ENCODE measurements at regions of chr2 and their contacts with region 1.

Region 1: GRCh38 chr2:207746131-207746530 is 23.6 kb downstream of the FZD5 start:
- DNase-seq: peak; percentile 85
- ATAC-seq: peak; percentile 79
- H3K4me3 ChIP-seq: no peak overlapping the region
- H3K27ac ChIP-seq: peak overlapping the region; percentile 2
- H3K4me1 ChIP-seq: peaks cover 64% of the 10 kb centered on the region
- H3K27me3 ChIP-seq: no peaks in the 10 kb centered on the region
- CTCF ChIP-seq: peak; percentile 97
- EP300 ChIP-seq: peak in 1 of 2 experiments; percentile 36; a peak in 1 of 4 replicates
- POLR2A ChIP-seq: no peak
- RAD21 ChIP-seq: peak; percentile 99

Region 2: DNA sequence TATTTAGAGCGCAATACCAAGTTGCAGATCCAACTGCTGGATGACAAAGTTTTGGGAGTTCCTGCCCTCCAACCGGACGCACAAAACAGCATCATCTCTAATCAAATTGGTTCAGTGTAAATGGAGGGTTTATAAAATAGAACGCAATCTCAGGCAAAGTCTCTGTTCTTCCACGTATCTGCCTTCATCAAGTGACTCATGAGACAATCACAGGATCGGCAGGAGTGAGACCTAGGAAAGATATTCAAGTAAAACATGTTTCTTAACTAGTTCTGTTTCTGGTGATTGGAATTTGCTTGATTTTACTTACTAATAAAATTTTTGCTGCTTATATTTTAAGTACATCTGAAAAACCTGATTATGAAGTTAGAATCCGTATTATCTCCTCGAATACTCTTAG is 16.0 kb after region 1 on chr2:
- CTCF ChIA-PET with region 1: no interaction called
- POLR2A ChIA-PET with region 1: interaction called, 160 read pairs
- in situ Hi-C with region 1: no loop called
- intact Hi-C with region 1: no loop called
- DNase-seq: no peak
- ATAC-seq: no peak
- H3K4me3 ChIP-seq: no peak overlapping the region
- H3K27ac ChIP-seq: peak overlapping the region; percentile 5
- H3K4me1 ChIP-seq: peaks cover 61% of the 10 kb centered on the region
- H3K27me3 ChIP-seq: no peaks in the 10 kb centered on the region; a peak in 1 of 5 replicates
- CTCF ChIP-seq: no peak
- EP300 ChIP-seq: no peak
- POLR2A ChIP-seq: no peak
- RAD21 ChIP-seq: no peak

Region 3: GRCh38 chr2:207833251-207833751 is 87.2 kb after region 1 on chr2:
- CTCF ChIA-PET with region 1: no interaction called
- POLR2A ChIA-PET with region 1: interaction called, 19 read pairs
- in situ Hi-C with region 1: no loop called
- intact Hi-C with region 1: no loop called
- DNase-seq: peak; percentile 87
- ATAC-seq: peak; percentile 33
- H3K4me3 ChIP-seq: no peak overlapping the region
- H3K27ac ChIP-seq: peak overlapping the region; percentile 16
- H3K4me1 ChIP-seq: peaks cover 80% of the 10 kb centered on the region
- H3K27me3 ChIP-seq: no peaks in the 10 kb centered on the region
- CTCF ChIP-seq: no peak
- EP300 ChIP-seq: no peak; a peak in 1 of 4 replicates
- POLR2A ChIP-seq: no peak
- RAD21 ChIP-seq: no peak

Region 4: GRCh38 chr2:207905546-207905945 is 159.4 kb after region 1 on chr2:
- CTCF ChIA-PET with region 1: no interaction called
- POLR2A ChIA-PET with region 1: no interaction called
- in situ Hi-C with region 1: no loop called
- intact Hi-C with region 1: no loop called
- DNase-seq: no peak
- ATAC-seq: no peak
- H3K4me3 ChIP-seq: no peak overlapping the region
- H3K27ac ChIP-seq: no peak overlapping the region
- H3K4me1 ChIP-seq: peaks cover 82% of the 10 kb centered on the region
- H3K27me3 ChIP-seq: no peaks in the 10 kb centered on the region
- CTCF ChIP-seq: no peak
- EP300 ChIP-seq: no peak
- POLR2A ChIP-seq: no peak
- RAD21 ChIP-seq: no peak

Region 5: DNA sequence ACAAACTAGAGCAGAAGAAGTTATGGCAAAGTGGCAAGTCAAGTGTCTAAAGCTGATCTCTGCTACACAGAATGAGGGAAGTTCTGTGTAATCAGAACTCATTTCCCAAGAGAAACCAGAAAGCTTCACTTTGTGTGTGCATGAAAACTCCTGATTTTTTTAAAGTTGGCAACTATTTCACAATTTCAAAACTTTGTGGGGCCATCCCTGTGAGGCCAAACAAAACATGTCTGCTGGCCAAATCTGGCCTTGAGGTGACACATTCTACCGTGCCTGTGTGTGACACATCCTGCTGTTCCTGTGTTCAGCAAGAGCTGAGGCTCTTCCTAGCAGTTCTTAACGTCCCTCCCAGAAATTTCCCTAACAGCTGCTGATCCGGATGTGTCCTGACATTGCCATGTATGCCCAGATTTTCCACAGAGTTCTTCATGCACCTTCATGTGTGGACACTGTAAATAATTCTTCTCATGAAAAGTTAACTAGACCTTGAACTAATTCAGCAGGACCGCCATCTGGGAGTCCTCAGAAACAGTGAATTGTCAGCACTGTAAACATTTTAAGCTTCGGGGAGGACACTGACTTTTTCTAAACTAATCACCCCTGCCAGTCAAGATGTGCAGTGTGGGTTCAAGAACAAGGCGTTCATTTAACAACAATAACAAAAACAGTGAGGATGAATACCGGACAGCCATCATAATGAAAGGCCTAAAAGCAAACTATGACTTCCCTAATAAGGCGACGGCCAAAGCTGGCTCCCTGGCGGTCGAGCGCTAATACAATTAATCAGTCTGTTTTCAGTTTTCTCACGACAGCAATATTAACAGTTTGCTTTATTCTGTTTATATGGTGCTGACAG is 180.2 kb after region 1 on chr2:
- CTCF ChIA-PET with region 1: no interaction called
- POLR2A ChIA-PET with region 1: interaction called, 10 read pairs
- in situ Hi-C with region 1: no loop called
- intact Hi-C with region 1: no loop called
- DNase-seq: peak; percentile 96
- ATAC-seq: peak; percentile 97
- H3K4me3 ChIP-seq: peak overlapping the region in 2 of 3 experiments; percentile 5 to 18; a peak in 2 of 6 replicates
- H3K27ac ChIP-seq: peak overlapping the region; percentile 66
- H3K4me1 ChIP-seq: peaks cover 51% of the 10 kb centered on the region
- H3K27me3 ChIP-seq: no peaks in the 10 kb centered on the region
- CTCF ChIP-seq: no peak
- EP300 ChIP-seq: peak; percentile 53 to 79; a peak in 3 of 4 replicates
- POLR2A ChIP-seq: peak in 1 of 2 experiments; percentile 17; a peak in 1 of 4 replicates
- RAD21 ChIP-seq: no peak; the same call in 1 of the 2 replicates

Region 6: DNA sequence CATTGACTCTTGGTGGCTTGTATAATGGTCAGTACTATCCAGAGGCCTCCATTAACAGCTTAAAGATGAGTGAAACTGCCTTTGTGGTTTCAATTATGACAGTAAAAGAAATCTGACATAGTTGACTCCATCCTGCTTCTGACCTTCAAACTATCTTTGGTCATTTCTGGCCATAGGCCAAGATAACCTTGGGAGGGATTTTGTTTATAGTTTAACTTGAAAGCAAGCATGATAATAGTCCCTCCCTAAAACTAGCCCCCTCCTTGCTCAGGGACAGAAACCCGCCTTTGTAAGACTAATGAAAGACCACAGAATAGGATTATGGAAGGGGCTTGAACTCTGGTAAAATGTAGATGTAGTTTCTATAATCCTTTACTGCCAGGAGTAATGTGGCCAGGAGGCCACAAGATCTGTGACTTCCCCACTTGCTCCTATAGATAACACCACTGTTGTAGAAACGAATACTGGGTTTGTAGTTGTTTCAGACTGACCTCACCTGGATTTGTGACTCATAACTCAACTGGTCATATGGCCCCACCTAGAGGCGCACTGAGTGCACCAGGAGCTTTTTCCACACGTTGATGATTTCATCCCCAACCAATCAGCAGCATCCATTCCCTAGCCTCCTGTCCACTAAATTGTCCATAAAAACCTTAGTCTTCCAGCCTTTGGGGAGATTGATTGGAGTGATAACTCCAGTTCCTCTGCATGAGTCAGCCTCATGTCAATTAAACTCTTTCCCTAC is 287.8 kb after region 1 on chr2:
- CTCF ChIA-PET with region 1: interaction called, 32 read pairs
- POLR2A ChIA-PET with region 1: interaction called, 24 read pairs
- in situ Hi-C with region 1: loop called (anchors 5 kb)
- intact Hi-C with region 1: loop called (anchors 1 kb)
- DNase-seq: peak; percentile 97
- ATAC-seq: peak; percentile 90
- H3K4me3 ChIP-seq: peak overlapping the region; percentile 4 to 16 (median 14); a peak in 2 of 6 replicates
- H3K27ac ChIP-seq: peak overlapping the region; percentile 70
- H3K4me1 ChIP-seq: peaks cover 70% of the 10 kb centered on the region
- H3K27me3 ChIP-seq: no peaks in the 10 kb centered on the region
- CTCF ChIP-seq: peak; percentile 98
- EP300 ChIP-seq: peak; percentile 53 to 55; a peak in 3 of 4 replicates
- POLR2A ChIP-seq: no peak
- RAD21 ChIP-seq: peak; percentile 91

Region 7: GRCh38 chr2:208265801-208266552 is 519.8 kb after region 1 on chr2 and contains the start of gene PIKFYVE:
- CTCF ChIA-PET with region 1: no interaction called
- POLR2A ChIA-PET with region 1: no interaction called
- in situ Hi-C with region 1: no loop called
- intact Hi-C with region 1: loop called (anchors 5 kb)
- DNase-seq: peak; percentile 99
- ATAC-seq: peak; percentile 94
- H3K4me3 ChIP-seq: peak within 1 kb of the TSS; percentile 71 to 87 (median 86)
- H3K27ac ChIP-seq: peak within 1 kb of the TSS; percentile 79
- H3K4me1 ChIP-seq: peaks cover 45% of the 10 kb centered on the region
- H3K27me3 ChIP-seq: no peaks in the 10 kb centered on the region; a peak in 1 of 5 replicates
- CTCF ChIP-seq: 0 out of 2 replicates have a peak, but pooled peaks have one; percentile 40
- EP300 ChIP-seq: peak; percentile 34 to 81; a peak in 2 of 4 replicates
- POLR2A ChIP-seq: peak; percentile 62 to 76; a peak in 3 of 4 replicates
- RAD21 ChIP-seq: 0 out of 2 replicates have a peak, but pooled peaks have one; percentile 12
- total RNA-seq, gene PIKFYVE: 21.7 and 24.4 TPM in 2 replicates

Measured in HepG2 (cell line).